ENCODE measurements at regions of chr12 and their contacts with region 1.

Region 1: GRCh38 chr12:54398995-54399793 is 14.7 kb upstream of the ZNF385A start:
- DNase-seq: peak; percentile 90
- H3K4me3 Mint-ChIP-seq: no peak overlapping the region
- H3K27ac Mint-ChIP-seq: no peak overlapping the region
- H3K4me1 Mint-ChIP-seq: peaks cover 21% of the 10 kb centered on the region
- H3K27me3 Mint-ChIP-seq: no peaks in the 10 kb centered on the region

Region 2: DNA sequence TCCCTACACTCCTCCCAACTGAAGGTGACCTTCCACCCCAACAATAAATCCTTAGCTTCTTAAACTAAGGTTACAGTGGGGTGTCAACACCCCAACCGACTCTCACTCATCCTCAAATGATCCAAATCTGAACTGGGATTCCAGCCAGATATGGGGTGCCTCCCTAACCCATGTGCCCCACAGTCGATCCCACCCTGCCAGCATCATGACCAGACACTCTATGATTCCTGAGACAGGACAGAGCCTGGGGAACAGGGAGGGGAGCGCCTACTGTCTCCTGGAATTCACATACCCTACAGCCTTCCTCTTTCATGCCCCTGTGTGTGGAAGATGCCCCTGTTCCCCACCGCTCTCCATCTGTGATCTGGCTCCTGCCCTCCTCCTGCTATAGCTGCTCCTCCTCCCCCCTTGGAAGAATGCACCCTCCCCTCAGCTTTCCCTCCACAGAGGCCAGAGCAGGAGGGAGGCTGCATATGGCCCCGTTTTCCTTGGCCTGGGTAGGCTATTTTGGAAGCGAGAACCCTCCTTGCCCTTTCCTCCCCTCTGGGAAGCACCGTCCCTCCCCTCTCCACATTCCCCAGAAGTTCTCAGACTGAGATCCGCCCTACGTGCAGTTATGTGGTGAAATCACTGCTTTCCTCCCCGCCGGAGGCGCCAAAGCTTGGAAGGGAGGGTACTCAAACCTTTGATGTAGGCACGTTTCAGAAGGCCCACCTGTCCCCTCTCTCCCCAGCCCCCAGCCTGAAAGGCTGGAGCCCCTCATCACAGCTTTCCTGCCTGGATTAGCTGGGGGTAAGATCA is 258.4 kb before region 1 on chr12:
- CTCF ChIA-PET with region 1: no interaction called
- POLR2A ChIA-PET with region 1: no interaction called
- DNase-seq: no peak
- H3K4me3 Mint-ChIP-seq: no peak overlapping the region
- H3K27ac Mint-ChIP-seq: no peak overlapping the region
- H3K4me1 Mint-ChIP-seq: no peaks in the 10 kb centered on the region
- H3K27me3 Mint-ChIP-seq: peaks cover 62% of the 10 kb centered on the region

Region 3: DNA sequence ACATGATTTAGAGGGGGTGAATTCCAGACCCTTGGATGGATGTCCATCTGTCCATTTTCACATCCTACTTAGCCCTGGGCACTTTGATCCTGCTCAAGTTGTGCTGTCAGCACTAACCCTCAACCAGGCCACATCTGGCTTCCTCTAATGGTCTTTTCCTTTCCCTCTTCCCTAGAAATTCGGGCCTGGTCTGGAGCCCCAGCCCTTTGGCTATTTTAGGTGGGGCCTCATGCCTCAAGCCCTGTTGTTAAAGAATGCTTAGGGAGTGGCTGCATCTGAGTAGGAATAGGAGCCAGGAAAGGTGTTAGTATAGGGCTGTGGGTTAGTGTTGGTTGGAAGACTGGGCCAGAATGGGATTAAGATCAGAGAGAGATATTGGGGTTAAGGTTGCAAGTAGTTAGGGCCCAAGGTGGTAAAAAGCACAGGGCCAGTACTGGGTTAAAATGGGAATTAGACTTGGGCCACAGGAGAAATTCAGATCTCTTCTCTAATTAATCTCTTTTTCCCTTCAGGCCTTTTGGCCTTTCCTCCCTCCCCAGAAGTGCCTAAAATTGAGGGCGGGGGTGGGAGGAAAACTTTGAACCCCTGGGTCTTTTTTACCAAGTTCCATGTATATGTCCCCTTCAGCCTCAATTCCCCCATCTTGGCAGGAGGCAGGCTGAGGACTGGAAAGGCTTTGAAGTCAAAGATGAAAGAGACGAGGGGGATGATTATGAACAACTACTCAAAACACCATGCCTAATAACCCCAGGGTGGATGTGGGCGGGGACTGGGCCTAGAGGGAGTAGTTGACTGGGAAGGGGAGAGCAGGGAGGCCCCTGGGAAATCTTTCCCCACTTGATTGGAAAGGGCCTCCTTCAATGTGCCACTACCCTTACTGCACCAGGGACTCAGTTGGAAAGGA is 10.7 kb before region 1 on chr12:
- CTCF ChIA-PET with region 1: interaction called, 10 read pairs
- POLR2A ChIA-PET with region 1: no interaction called
- DNase-seq: no peak
- H3K4me3 Mint-ChIP-seq: no peak overlapping the region
- H3K27ac Mint-ChIP-seq: no peak overlapping the region
- H3K4me1 Mint-ChIP-seq: peaks cover 20% of the 10 kb centered on the region
- H3K27me3 Mint-ChIP-seq: peaks cover 2% of the 10 kb centered on the region

Region 4: DNA sequence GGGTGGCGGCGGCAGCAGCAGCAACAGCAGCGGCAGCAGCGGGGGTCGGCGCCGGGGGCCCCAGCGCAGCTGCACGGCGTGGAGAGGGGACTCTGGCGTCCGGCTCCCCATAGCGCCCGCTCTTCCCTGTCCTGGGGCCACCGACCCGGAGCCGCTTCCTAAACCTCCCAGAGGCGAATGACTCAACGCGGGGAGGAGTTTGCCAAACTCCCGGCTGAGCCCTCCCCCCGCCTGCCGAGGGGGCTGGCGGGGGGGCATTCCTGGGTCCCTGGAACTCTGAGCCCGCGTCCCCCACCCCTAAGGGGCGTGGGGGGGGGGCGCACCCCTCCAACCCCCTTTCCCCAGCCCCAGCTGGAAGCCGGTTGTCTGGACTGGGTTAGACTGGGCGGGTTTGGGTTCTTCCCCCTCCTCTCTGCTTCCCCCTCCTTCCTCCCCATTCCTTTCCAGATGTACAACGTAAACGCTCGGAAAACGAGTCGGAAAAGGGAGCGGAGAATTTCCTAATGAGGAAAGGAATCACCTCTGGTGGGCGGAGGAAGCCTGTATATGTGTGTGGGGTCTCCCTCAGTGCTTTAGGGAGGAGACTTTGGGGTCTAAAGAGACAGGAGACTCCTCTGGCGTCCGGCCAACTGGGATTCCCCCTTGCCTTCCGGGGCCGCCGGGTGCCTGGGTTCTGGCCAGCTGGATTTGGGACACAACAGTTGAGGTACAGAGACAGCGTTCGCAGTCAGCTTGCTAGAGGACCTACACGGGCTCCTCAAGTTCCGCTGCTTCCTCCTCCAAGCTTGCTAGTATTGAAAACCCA is 20.1 kb after region 1 on chr12 and contains the start of gene ITGA5:
- CTCF ChIA-PET with region 1: interaction called, 64 read pairs
- POLR2A ChIA-PET with region 1: no interaction called
- DNase-seq: peak; percentile 36
- H3K4me3 Mint-ChIP-seq: peak within 1 kb of the TSS; percentile 98
- H3K27ac Mint-ChIP-seq: peak within 1 kb of the TSS; percentile 94
- H3K4me1 Mint-ChIP-seq: peaks cover 57% of the 10 kb centered on the region
- H3K27me3 Mint-ChIP-seq: peaks cover 32% of the 10 kb centered on the region
- total RNA-seq, gene ITGA5: 83.5 to 88.7 TPM

Region 5: DNA sequence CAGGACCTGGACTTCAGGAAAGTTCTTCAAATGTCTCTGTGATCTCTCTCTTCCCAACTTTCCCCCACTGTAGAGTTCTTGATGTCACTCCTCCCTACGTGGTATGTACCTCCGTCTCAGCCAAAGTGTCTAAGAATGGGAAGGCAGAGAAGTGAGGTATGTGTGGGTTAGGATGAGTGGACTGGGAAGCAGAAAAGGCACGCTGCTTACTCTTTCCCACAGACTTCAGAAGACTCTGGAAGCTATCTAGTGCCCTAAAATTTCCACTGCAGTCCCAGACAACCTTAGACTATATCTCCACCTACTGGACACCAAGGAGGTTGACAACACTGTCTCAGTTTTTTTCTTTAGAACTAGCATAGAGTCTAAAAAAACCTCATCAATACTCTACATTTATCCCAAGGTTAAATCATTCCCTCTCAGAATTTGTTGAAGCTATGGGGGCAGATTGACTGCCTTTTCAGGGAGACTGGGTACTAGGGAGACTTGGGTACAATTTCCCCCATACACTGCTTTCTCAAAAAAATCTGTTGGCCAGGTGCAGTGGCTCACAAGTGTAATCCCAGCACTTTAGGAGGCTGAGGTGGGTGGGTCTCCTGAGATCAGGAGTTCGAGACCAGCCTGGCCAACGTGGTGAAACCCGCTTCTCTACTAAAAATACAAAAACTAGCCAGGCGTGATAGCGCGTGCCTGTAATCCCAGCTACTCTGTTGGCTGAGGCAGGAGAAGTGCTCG is 40.5 kb after region 1 on chr12:
- CTCF ChIA-PET with region 1: interaction called, 115 read pairs
- POLR2A ChIA-PET with region 1: interaction called, 11 read pairs
- DNase-seq: peak; percentile 17
- H3K4me3 Mint-ChIP-seq: no peak overlapping the region
- H3K27ac Mint-ChIP-seq: no peak overlapping the region
- H3K4me1 Mint-ChIP-seq: peaks cover 7% of the 10 kb centered on the region
- H3K27me3 Mint-ChIP-seq: peaks cover 7% of the 10 kb centered on the region

Region 6: GRCh38 chr12:54497883-54498282 is 98.7 kb after region 1 on chr12:
- CTCF ChIA-PET with region 1: interaction called, 16 read pairs
- POLR2A ChIA-PET with region 1: no interaction called
- DNase-seq: no peak
- H3K4me3 Mint-ChIP-seq: peak overlapping the region; percentile 98
- H3K27ac Mint-ChIP-seq: peak overlapping the region; percentile 91
- H3K4me1 Mint-ChIP-seq: peaks cover 41% of the 10 kb centered on the region
- H3K27me3 Mint-ChIP-seq: no peaks in the 10 kb centered on the region